Common myeloid progenitor, CD34-positive (primary cell): ENCODE measurements at regions of chr12 and their contacts with region 1.

Region 1: DNA sequence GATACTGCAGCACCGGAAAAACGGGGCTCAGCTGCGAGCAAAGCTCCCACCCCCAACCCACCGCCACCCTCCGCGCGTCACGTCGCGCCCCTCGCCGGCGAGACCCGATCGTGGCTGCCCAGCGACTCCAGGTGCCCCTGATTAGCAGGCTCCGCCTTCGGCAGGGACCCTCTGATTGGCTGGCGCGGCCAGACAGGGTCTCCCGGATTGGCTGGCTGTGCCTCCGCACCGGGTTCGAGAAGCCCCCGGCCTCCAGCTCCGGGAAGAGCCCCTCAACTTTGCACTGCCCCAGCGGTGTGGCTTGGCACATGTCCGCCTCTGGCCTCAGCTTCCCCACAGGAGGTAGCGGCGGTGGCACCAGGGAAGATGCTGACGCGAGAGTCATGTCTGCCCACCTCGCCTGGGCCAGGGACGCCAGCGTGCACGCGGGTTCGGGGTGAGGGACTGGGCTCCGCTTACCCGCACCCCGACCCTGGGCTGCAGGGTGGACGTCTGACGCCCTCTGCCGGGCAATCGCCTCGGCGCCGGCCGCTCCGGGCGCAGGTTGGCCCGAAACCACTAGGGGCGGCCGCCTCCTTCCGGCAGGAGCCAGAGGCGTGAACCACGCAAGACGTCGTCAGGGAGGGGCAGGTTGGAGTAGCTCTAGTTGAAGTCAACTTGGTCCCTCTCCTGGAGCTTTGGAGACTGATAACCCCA is 498 bp upstream of the RHOF start:
- DNase-seq: peak; percentile 94 to 96 (median 96)
- H3K4me3 ChIP-seq: peak overlapping the region; percentile 37 to 85 (median 77)
- H3K27ac ChIP-seq: peak overlapping the region in 1 of 2 experiments; percentile 69
- H3K4me1 ChIP-seq: peaks cover 10 to 82% (median 77%) of the 10 kb centered on the region in 4 experiments
- H3K27me3 ChIP-seq: no peaks in the 10 kb centered on the region

Region 2: DNA sequence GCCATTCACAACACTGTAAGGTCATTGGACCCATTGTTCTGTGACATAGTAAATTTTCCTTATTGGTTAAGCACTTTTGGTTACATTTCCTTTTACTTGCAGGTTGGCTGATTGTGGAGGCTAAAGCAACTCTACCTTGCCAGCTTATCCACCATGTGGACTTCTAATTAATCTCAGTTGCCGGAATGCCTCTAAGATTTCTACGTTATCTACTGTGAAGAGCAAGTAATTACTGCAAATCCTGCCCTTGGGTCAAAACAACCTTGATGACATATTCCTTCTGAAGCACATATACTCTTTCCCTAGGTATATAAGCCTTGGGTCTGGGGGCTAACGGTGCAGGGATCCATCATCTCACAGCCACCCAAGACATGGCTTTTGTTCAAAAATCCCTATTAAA is 105.0 kb before region 1 on chr12:
- CTCF ChIA-PET with region 1: interaction called, 37 read pairs
- POLR2A ChIA-PET with region 1: no interaction called
- DNase-seq: no peak
- H3K4me3 ChIP-seq: no peak overlapping the region
- H3K27ac ChIP-seq: no peak overlapping the region
- H3K4me1 ChIP-seq: peaks cover 0 to 5% (median 2%) of the 10 kb centered on the region in 4 experiments
- H3K27me3 ChIP-seq: no peaks in the 10 kb centered on the region

Region 3: DNA sequence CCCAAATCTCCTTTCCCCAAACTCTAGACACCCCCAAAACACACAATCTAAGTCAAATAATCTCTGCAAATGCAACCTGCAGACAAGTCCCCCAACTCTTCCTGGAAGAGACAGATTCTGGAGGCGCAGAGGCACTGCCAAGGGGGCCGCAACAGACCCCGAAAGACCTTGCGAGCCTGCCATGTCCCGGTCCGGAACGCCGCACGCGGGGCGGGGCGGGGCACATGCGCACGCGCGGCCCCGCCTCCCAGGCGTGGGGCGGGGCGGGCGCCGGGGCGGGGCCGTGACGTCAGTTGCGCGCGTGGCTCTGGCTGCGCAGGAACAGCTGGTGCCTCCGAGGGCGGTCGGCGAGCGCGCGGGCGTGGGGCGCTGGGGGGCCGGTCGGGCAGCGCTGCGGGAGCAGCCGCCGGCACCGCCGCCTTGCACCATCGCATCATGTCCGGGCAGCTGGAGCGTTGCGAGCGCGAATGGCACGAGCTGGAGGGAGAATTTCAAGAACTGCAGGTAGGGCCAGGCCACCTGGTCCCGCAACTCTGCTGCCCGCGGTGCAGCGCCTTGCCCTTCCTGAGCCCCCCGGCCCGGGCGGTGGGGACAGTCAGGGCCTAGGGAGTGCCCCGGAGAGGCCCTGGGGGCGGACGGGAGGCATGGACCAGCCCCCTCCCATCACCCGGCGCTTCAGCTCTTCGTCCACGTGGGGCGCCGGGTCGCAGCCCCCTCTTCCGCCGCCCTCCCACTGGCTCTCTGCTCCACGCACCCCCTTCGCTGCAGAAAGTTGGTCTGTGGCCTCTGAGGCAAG is 81.3 kb before region 1 on chr12 and contains the start of gene TMEM120B:
- CTCF ChIA-PET with region 1: interaction called, 12 read pairs
- POLR2A ChIA-PET with region 1: interaction called, 4 read pairs
- DNase-seq: peak; percentile 65 to 78 (median 73)
- H3K4me3 ChIP-seq: peak within 1 kb of the TSS; percentile 44 to 92 (median 83)
- H3K27ac ChIP-seq: peak within 1 kb of the TSS; percentile 33 to 82
- H3K4me1 ChIP-seq: peaks cover 3 to 30% (median 19%) of the 10 kb centered on the region in 4 experiments
- H3K27me3 ChIP-seq: no peaks in the 10 kb centered on the region

Region 4: GRCh38 chr12:121781998-121782979 is 11.7 kb before region 1 on chr12:
- CTCF ChIA-PET with region 1: interaction called, 405 read pairs
- POLR2A ChIA-PET with region 1: interaction called, 34 read pairs
- DNase-seq: peak; percentile 48 to 86 (median 82)
- H3K4me3 ChIP-seq: peak overlapping the region in 2 of 7 experiments; percentile 25 to 33
- H3K27ac ChIP-seq: peak overlapping the region; percentile 27 to 73
- H3K4me1 ChIP-seq: peaks cover 0 to 46% (median 34%) of the 10 kb centered on the region in 4 experiments
- H3K27me3 ChIP-seq: no peaks in the 10 kb centered on the region

Region 5: GRCh38 chr12:121823101-121823726 is 29.2 kb after region 1 on chr12:
- CTCF ChIA-PET with region 1: interaction called, 40 read pairs
- POLR2A ChIA-PET with region 1: no interaction called
- DNase-seq: no peak
- H3K4me3 ChIP-seq: no peak overlapping the region
- H3K27ac ChIP-seq: no peak overlapping the region
- H3K4me1 ChIP-seq: no peaks in the 10 kb centered on the region
- H3K27me3 ChIP-seq: no peaks in the 10 kb centered on the region

Region 6: GRCh38 chr12:121888478-121889266 is 94.7 kb after region 1 on chr12 and contains the start of gene PSMD9:
- CTCF ChIA-PET with region 1: interaction called, 90 read pairs
- POLR2A ChIA-PET with region 1: interaction called, 4 read pairs
- DNase-seq: peak; percentile 97 to 98 (median 98)
- H3K4me3 ChIP-seq: peak within 1 kb of the TSS; percentile 72 to 94 (median 90)
- H3K27ac ChIP-seq: peak within 1 kb of the TSS; percentile 87 to 91
- H3K4me1 ChIP-seq: peaks cover 3 to 22% (median 16%) of the 10 kb centered on the region in 4 experiments
- H3K27me3 ChIP-seq: no peaks in the 10 kb centered on the region